Endothelial cell of umbilical vein (primary cell): ENCODE measurements at regions of chr16 and their contacts with region 1.

Region 1: DNA sequence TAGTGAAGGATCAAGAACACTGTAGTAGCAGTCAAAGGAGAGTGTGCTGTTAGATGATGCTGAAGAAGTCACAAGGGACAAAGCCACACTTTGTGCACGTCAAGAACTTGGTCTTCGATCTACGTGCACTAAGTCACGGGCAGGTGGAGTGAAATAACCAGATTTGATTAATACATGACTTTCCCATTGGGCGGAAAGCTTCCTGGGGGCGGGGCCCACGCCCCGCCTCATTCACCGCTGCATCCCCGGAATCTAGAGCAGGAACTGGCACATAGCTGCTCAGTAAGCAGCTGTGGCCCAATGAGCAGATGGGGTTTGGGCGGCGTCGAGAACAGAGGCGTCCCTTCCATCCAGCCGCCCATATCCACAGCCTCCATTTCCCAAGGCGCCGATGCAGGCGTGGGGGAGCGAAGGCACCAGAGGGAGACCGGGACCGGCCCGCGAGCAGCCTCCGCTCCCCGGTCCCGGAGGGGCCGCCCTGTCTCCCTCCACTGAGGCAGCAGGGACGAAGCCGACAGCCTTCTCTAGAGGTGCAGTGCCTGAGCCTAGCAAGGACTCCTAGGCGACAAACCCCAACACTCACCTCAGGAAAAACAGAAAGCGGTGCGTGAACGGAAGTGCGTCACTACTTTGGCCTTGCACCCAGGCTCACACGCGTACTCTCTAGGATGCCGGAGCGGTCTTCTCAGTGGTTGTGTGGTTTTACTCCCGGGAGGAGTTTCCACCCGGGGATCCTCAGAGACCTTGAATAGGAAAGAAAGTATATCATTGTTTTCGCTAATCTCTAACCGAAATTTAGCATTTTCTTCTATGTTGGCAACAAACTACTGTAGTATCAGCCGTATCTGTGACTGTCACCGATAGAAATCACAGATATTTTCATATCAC is 4.9 kb downstream of the ZNF19 start:
- DNase-seq: peak; percentile 88
- H3K4me3 ChIP-seq: peak overlapping the region; percentile 16 to 80 (median 67)
- H3K27ac ChIP-seq: peak overlapping the region; percentile 76
- H3K4me1 ChIP-seq: peaks cover 4% of the 10 kb centered on the region
- H3K27me3 ChIP-seq: no peaks in the 10 kb centered on the region
- CTCF ChIP-seq: no peak
- POLR2A ChIP-seq: peak; percentile 70

Region 2: DNA sequence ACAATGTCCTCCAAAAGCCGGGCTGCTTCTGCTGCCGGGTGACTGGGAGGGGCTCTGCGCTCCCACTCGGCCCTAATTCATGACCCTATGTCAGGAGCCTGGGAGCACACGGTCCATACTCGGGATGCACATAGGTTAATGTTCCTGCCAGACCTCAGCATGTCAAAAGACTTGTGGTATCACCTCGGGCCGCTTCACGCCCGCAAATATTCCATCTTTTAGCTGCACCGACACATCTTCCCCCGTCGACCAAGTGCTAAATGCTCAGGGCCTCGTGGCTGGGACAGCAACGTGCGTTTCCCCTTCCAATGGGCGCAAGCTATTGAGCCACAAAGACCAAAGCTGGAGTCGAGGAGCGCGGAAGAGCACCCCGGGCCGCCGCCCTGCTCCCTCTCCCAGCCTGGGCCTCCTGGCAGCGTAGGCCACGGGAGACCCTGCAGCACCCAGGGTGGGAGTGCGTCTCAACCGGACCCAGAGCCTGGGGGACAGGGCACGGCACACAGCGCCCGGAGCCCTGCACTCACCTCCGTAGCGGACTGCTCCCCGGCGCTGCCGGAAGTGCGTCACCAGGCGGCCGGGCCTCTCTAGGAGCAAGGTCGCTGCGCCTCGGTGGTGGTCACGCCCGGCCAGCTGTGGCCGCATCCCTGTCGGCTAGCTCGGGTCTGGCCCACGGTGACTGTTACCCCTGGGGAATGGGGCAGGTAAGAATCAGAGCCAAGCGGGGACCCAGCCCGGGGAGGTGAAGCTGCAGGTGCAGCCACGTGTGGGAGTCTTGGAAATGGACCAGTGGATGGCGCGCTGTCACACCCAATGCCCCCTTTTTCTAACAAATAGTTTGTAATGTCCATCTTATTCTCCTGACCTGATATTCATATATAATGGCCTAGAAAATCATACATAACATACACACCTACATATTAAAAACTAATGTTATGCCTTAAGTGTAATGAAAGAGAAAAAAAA is 22.3 kb before region 1 on chr16 and contains the start of gene ZNF23:
- CTCF ChIA-PET with region 1: interaction called, 9 read pairs
- POLR2A ChIA-PET with region 1: interaction called, 8 read pairs
- dilution Hi-C with region 1: no loop called
- intact Hi-C with region 1: loop called (anchors 1 kb)
- DNase-seq: peak; percentile 76
- H3K4me3 ChIP-seq: peak within 1 kb of the TSS; percentile 46 to 94 (median 82)
- H3K27ac ChIP-seq: peak within 1 kb of the TSS; percentile 57
- H3K4me1 ChIP-seq: peaks cover 15% of the 10 kb centered on the region
- H3K27me3 ChIP-seq: no peaks in the 10 kb centered on the region
- CTCF ChIP-seq: no peak
- POLR2A ChIP-seq: peak; percentile 89
- total RNA-seq, gene ZNF23: 4.7 and 6.4 TPM in 2 replicates

Region 3: DNA sequence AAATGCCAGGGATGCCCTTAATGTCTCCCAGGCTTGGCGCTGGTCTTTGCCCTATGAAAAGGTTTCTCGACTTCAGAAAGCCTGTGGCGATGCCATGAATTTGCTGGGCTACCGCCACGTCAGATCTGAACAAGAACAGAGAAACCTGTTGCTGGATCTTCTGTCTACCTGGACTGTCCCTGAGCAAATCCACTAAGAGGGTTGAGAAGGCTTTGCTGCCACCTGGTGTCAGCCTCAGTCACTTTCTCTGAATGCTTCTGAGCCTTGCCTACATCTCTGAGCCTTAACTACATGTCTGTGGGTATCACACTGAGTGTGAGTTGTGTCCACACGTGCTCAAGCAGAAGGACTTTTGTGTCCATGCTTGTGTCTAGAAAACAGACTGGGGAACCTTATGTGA is 53.4 kb after region 1 on chr16:
- CTCF ChIA-PET with region 1: interaction called, 4 read pairs
- POLR2A ChIA-PET with region 1: no interaction called
- dilution Hi-C with region 1: no loop called
- intact Hi-C with region 1: loop called (anchors 1 kb)
- DNase-seq: peak; percentile 33
- H3K4me3 ChIP-seq: no peak overlapping the region
- H3K27ac ChIP-seq: no peak overlapping the region
- H3K4me1 ChIP-seq: no peaks in the 10 kb centered on the region
- H3K27me3 ChIP-seq: peaks cover 0 to 2% of the 10 kb centered on the region in 2 experiments
- CTCF ChIP-seq: peak; percentile 34 to 60
- POLR2A ChIP-seq: no peak